Esophagus muscularis mucosa (tissue), 4 donors: ENCODE measurements at regions of chr3 and their contacts with region 1.

Region 1: DNA sequence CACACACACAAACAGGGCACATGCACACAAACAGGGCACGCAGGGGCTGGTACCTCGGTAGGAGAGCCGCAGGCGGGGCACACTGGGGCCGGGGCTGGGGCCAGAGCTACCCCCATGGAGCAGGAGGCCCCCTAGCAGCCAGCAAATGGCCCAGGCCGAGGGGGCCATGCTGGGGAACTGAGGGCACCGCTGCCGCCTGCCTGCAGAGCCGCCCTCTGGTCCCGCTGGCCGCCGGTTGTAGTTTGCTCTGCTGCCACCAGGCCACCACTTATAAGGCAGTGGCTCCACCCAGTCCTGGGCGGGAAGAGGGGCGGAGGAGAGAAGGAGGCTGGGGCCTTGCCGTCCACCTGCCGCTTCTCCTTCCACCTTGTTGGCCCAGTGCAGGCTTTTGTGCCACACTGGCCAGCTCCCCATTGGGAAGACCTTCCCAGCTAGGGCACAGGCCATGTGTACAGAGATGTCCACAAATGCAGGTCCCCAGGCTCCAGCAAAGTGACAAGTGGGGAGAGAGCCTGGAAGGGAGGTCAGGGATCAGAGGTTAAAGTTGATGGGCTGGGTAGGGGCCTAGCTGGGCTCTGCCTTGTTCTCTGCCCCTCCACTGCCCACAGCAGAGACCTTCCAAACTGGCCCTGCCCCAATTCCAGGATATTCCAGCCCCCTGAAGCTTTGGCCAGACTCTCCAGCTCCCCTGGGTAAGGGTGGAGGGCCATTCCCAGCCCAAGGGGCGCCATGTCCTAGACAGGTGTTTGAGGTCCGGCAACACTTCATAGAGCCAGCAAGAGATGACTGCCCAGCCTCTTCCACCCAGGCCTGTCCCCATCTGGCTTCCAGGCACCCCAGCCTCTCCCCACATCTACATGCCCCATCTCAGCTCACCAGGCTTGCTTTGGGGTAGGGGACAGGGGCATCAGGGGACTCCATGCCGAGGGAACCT is at the start of gene SEMA3G:
- DNase-seq: peak; percentile 94
- H3K4me3 ChIP-seq: peak within 1 kb of the TSS; percentile 23 to 50 (median 39)
- H3K27ac ChIP-seq: peak within 1 kb of the TSS in 1 of 4 donors; percentile 23
- H3K4me1 ChIP-seq: peaks cover 19 to 31% (median 23%) of the 10 kb centered on the region in 4 donors
- H3K27me3 ChIP-seq: no peaks in the 10 kb centered on the region
- CTCF ChIP-seq: peak; percentile 35 to 86 (median 62)
- EP300 ChIP-seq: no peak
- POLR2A ChIP-seq: peak; percentile 19
- total RNA-seq, gene SEMA3G: 7.1 to 39.2 (median 22.2) TPM

Region 2: GRCh38 chr3:51887620-51888019 is 557.5 kb before region 1 on chr3:
- intact Hi-C with region 1: no loop called
- DNase-seq: peak; percentile 68
- H3K4me3 ChIP-seq: no peak overlapping the region
- H3K27ac ChIP-seq: no peak overlapping the region
- H3K4me1 ChIP-seq: no peaks in the 10 kb centered on the region
- H3K27me3 ChIP-seq: no peaks in the 10 kb centered on the region
- CTCF ChIP-seq: no peak
- EP300 ChIP-seq: no peak
- POLR2A ChIP-seq: no peak

Region 3: GRCh38 chr3:52339612-52340011 is 105.5 kb before region 1 on chr3:
- intact Hi-C with region 1: no loop called
- DNase-seq: no peak
- H3K4me3 ChIP-seq: no peak overlapping the region
- H3K27ac ChIP-seq: no peak overlapping the region
- H3K4me1 ChIP-seq: no peaks in the 10 kb centered on the region
- H3K27me3 ChIP-seq: no peaks in the 10 kb centered on the region
- CTCF ChIP-seq: peak; percentile 69 to 77 (median 70)
- EP300 ChIP-seq: no peak
- POLR2A ChIP-seq: no peak

Region 4: DNA sequence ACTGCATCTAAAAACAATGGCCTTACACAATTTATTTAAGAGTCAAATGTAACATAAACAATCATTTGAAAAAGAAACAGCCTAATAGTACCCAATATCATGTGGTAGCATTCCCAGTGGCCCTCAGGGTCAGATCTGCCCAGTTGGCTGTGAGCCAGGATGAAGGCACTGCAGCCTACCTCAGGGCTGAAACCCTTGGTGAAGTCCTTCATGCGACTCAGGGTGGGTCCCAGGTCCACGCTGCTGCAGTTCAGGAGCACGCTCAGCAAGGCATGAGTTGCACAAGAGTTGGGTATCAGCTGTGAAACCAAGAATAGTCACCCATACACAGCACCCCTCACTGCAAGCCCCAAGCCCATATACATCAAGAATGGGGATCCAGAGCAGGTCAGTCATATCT is 37.3 kb before region 1 on chr3:
- intact Hi-C with region 1: loop called (anchors 2 kb)
- DNase-seq: no peak
- H3K4me3 ChIP-seq: no peak overlapping the region
- H3K27ac ChIP-seq: no peak overlapping the region
- H3K4me1 ChIP-seq: peaks cover 32 to 58% (median 47%) of the 10 kb centered on the region in 4 donors
- H3K27me3 ChIP-seq: no peaks in the 10 kb centered on the region
- CTCF ChIP-seq: no peak
- EP300 ChIP-seq: no peak
- POLR2A ChIP-seq: no peak

Region 5: GRCh38 chr3:52428151-52429005 is 16.7 kb before region 1 on chr3:
- intact Hi-C with region 1: loop called (anchors 1 kb)
- DNase-seq: no peak
- H3K4me3 ChIP-seq: no peak overlapping the region
- H3K27ac ChIP-seq: peak overlapping the region in 1 of 4 donors; percentile 3
- H3K4me1 ChIP-seq: peaks cover 13 to 35% (median 20%) of the 10 kb centered on the region in 4 donors
- H3K27me3 ChIP-seq: no peaks in the 10 kb centered on the region
- CTCF ChIP-seq: peak; percentile 74 to 81 (median 76)
- EP300 ChIP-seq: no peak
- POLR2A ChIP-seq: no peak